Left cardiac atrium (tissue), 4 donors: ENCODE measurements at regions of chr16 and their contacts with region 1.

Region 1: DNA sequence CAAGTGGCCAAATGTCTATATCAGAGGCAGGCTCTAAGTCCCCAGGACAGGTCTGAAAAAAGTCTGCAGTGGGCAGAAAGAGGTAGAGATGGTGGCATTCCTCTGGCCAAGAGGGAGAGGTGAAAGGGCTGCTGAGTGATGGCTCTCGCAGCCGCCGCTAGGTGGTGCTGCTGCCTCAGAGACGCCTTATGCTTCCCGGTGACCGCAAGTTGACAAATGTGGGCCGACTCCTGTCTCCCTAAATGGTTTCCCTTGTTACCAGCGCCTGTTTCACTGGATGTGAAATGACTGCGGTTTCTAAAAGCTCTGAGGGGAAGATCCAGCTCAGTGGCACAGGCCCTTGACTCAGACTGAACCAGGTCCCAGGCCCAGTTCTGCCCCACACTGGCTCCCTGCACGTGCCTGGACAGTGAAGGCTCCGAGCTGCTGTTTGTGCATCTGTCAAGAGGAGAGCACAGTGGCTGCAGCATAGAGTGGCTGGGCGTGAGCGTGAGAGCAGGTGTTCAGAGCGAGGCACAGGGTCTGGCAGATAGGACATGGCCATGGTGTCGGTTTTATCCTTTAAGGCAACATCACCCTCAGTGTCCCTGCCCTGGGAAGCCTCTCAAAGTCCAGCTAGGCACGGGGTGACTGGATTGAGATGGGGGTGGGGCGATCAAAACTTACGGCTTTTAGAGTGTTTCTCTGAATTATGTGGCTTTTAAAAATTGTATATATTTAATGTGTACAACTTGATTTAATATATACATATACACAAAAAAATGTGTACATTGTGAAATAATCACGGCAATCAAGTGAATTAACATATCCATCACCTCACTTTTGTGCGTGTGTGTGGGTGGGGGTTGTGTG is 19.9 kb downstream of the CLEC16A start:
- DNase-seq: peak; percentile 82
- ATAC-seq: peak; percentile 80 to 89

Region 2: DNA sequence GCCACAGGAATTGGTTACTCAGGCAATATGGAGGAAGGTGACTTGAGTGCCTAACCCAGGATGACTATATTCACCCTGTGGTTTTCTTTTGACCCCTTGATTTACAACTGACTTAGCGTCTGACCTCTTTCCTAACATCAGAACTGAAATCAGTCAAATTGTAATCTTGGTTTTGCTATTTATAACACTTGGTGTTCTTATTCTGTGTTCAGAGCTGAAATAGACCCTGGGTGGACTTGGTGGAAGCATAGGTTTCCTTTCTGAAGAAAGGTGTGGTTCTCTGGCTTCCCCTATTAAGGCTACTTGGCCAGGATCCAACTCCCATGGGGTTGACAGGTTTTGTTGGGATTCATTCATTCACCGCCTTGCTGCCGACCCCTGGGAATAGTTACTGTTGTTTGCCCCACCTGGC is 60.9 kb after region 1 on chr16:
- intact Hi-C with region 1: no loop called
- DNase-seq: no peak
- ATAC-seq: no peak

Region 3: GRCh38 chr16:11356573-11357331 is 392.5 kb after region 1 on chr16:
- intact Hi-C with region 1: loop called (anchors 5 to 10 kb)
- DNase-seq: peak; percentile 74
- ATAC-seq: peak; percentile 51 to 64